Activated T-helper 2 cell treated with anti-CD3 and anti-CD28 coated beads, Interferon-gamma antibody, Interleukin-2, Interleukin-4, amounts not matched to agents 10 μg/mL and 5 μg/mL and 100 μg/mL, durations not matched to agents 14 hours and 24 hours and 36 hours (primary cell): ENCODE measurements at regions of chr19 and their contacts with region 1.

Region 1: DNA sequence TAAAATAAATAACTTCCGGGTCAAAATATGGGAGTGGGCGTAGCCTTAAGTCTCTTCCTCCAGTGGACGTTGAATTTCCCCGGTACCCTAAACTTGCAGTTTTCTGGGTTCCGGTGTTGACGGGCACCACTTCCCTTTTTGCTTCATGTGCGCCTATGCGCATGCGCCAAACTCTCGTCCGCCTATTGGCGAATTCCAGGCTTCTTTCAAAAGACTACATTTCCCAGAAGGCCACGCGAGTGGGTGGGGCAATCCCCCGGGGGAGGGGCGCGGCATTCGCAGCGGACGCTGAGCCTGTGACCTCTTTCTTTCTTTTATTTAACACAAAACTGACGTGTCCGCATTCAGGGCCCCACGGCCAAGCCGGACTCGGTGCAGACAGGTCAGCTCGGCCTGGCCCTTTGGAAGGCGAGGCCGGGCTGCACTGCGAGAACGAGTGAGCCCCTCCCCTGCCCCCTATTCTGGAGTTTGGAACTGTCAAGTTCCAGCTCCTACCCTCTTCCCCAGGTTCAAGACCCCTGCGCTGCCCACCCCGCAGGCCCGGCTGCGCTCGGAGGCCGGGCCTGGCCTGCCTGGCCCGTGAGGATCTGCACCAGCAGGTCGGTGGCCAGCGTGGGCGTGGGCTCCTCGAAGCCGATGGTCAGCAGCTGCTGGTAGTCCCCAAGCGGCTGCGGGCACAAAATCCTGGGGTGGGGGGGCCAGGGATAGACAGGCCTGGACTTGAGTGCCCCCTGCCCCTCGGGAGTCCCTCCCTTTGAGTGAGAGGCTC is 4.1 kb downstream of the C19orf67 start:
- DNase-seq: peak; percentile 99
- H3K4me3 Mint-ChIP-seq: peak overlapping the region; percentile 93
- H3K27ac Mint-ChIP-seq: peak overlapping the region; percentile 93
- H3K4me1 Mint-ChIP-seq: peaks cover 7% of the 10 kb centered on the region
- H3K27me3 Mint-ChIP-seq: no peaks in the 10 kb centered on the region

Region 2: DNA sequence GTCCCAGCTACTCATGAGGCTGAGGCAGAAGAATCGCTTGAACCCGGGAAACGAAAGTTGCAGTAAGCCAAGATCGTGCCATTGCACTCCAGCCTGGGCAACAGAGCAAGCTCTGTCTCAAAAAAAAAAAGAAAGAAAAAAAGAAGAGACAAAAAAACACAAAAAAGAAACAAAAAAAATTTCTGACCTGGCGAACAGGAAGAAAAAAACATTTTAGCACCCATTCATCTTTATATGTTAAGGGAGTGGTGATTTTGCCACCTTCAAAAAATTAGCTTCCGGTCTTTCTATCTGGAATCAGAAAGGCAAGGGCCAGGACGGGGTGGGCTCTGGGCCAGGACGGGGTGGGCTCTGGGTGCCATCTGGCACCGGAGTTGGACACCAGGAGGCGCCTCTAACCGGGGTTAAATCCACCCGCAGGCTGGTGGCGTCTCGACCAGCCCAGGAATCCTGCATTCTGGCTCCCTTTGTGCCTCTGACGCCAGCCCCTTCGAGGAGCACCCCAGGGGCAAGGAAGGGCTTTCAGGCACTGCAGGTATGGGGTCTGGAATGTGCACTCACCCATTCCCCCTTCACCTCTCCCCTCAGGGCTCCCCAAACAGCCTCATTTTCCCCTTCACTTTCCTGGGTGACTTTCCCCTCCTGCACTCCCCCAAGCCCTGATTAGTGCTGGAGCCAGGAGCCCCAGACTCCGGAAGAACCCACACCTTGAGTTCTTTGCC is 296.6 kb before region 1 on chr19:
- intact Hi-C with region 1: loop called (anchors 10 kb)
- DNase-seq: peak; percentile 53
- H3K4me3 Mint-ChIP-seq: no peak overlapping the region
- H3K27ac Mint-ChIP-seq: peak overlapping the region; percentile 51
- H3K4me1 Mint-ChIP-seq: peaks cover 18% of the 10 kb centered on the region
- H3K27me3 Mint-ChIP-seq: no peaks in the 10 kb centered on the region